Right cardiac atrium (tissue), 5 donors: ENCODE measurements at regions of chr1 and their contacts with region 1.

Region 1: GRCh38 chr1:198771563-198772153 is 132.8 kb downstream of the PTPRC start:
- DNase-seq: no peak
- ATAC-seq: no peak
- H3K4me3 ChIP-seq: no peak overlapping the region
- H3K27ac ChIP-seq: no peak overlapping the region
- H3K4me1 ChIP-seq: no peaks in the 10 kb centered on the region
- H3K27me3 ChIP-seq: no peaks in the 10 kb centered on the region

Region 2: DNA sequence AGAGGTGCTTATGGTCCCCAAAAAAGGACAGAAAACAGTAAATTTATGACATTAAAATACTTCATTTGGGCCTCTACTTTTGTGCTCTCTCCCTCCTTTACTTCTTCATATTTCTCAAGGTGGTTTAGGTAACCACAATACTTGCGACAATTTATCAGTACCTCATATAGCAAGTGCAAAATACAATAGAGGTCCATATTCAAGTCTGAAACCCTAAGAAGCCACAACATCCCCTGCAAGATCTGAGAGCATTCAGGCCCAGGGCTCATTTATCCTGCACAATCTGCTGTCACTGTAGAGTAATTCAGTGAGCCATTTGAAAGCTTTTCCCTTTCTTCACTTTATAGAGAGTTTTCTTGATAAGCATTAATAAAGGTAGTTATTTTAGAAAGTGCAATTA is 206.9 kb before region 1 on chr1:
- intact Hi-C with region 1: no loop called
- DNase-seq: no peak
- ATAC-seq: no peak
- H3K4me3 ChIP-seq: no peak overlapping the region
- H3K27ac ChIP-seq: no peak overlapping the region
- H3K4me1 ChIP-seq: no peaks in the 10 kb centered on the region
- H3K27me3 ChIP-seq: no peaks in the 10 kb centered on the region

Region 3: DNA sequence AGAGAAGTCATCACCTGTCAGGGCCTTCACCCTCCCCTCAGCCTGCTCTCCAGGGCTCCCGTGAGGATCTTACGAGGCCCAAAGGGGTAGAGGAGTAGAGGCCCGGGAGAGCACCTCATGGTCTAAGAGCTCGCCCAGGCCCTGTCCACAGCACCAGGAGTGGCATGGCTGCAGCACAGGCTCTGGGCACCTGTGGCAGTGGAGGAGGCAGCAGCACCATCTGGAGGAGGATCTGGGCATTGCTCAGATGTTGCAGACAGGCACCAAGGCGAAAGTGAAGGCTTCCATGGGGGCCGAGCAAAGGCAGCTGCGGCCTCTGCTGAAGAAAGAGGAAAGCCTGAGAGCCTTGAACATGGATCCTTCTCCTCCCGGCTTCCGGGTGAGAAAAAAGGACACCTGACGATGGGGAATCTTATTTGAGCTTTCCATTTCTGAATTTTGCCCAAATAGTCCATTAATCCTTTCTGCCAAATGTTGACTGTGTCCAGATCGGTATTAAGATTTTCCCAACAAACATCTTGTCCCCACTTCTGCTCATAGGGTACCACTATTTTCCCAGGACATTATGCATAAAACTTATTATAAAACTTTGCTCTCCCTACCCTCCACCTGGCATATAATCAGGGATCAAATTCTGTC is 471.9 kb after region 1 on chr1:
- intact Hi-C with region 1: loop called in 1 of 4 experiments (anchors 10 kb)
- DNase-seq: peak; percentile 27 to 77 (median 65)
- ATAC-seq: peak; percentile 67 to 72
- H3K4me3 ChIP-seq: no peak overlapping the region
- H3K27ac ChIP-seq: no peak overlapping the region
- H3K4me1 ChIP-seq: no peaks in the 10 kb centered on the region
- H3K27me3 ChIP-seq: no peaks in the 10 kb centered on the region

Region 4: DNA sequence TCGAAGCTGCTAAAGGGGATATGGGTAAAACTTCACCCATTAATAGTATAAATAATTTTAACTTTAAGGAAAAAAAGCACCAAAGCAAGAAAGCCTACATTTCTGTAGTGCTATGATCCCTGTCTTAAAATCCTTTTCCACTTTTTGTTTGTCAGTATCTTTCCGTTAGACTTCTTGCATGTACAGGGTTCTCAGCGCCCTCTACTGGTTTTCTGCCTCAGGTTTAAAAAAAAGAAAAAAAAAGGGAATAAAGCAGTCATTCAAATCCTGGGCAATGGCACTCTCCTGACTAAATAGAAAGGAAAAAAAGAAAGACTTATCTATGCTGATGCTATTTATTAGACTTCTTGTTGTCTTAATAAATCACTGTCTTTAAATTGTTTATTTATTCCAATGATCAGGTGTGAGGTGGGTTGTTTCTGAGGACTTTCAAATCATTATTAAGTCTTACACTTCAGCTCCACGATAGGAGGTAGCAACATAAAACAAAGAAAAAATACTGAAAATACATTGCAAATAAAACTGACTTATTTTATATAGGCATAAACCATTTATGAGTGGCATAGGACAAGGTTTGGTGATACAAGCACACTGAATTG is 780.4 kb after region 1 on chr1:
- intact Hi-C with region 1: loop called in 1 of 4 experiments (anchors 10 kb)
- DNase-seq: no peak
- ATAC-seq: no peak
- H3K4me3 ChIP-seq: no peak overlapping the region
- H3K27ac ChIP-seq: no peak overlapping the region
- H3K4me1 ChIP-seq: no peaks in the 10 kb centered on the region
- H3K27me3 ChIP-seq: no peaks in the 10 kb centered on the region